ENCODE measurements at regions of chr4 and their contacts with region 1.

Region 1: GRCh38 chr4:52983563-52984303 is 121.6 kb downstream of the RASL11B start:
- DNase-seq: peak; percentile 18
- ATAC-seq: no peak
- H3K4me3 ChIP-seq: no peak overlapping the region
- H3K27ac ChIP-seq: no peak overlapping the region
- H3K4me1 ChIP-seq: no peaks in the 10 kb centered on the region
- H3K27me3 ChIP-seq: no peaks in the 10 kb centered on the region
- CTCF ChIP-seq: peak; percentile 54; the same call in 1 of the 2 replicates

Region 2: DNA sequence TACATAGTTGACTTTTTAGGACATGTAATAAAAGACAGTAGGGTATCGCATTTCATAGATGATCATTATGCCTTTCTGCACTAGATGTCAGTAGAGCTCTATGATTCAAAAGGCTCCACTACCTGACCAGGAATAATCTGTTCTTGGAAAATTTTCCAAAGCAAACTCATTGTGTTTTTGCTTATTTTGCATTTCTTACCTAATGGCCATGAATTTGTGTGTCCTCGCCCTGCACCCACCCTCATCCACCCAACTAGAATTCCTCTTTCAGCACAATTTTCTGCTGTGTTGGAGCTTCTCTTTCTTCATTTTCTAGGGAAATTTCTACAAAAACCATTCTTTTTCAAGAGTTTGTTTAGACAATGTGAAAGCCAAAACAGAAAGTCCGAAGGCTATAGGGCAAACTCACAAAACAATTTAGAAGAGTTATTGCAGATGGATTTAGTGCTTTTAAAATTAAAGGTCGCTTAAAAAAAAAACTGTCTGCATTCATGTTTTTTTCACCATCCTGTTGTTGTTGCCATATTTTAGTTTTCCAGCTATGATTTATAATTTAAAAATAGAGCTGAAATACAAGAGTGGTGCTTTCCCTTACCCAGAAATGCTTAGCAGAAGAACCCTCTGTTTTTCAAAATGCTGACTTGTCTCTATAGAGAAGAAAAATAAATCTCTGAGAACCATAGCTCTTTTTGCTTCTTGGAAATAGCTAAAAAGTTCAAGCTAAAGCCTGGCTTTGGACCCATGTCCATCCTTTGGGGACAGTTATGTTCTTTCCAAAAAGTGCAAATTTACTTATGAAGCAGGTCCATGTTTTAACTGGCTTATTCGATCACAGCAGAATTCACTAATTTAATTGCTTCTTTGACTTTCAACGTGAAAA is 748.9 kb before region 1 on chr4:
- CTCF ChIA-PET with region 1: no interaction called
- POLR2A ChIA-PET with region 1: no interaction called
- in situ Hi-C with region 1: no loop called
- intact Hi-C with region 1: loop called (anchors 10 kb)
- DNase-seq: peak; percentile 10
- ATAC-seq: no peak; the same call in 1 of the 2 replicates
- H3K4me3 ChIP-seq: no peak overlapping the region
- H3K27ac ChIP-seq: no peak overlapping the region
- H3K4me1 ChIP-seq: no peaks in the 10 kb centered on the region
- H3K27me3 ChIP-seq: no peaks in the 10 kb centered on the region
- CTCF ChIP-seq: peak; percentile 37; the same call in 1 of the 2 replicates

Region 3: GRCh38 chr4:52376132-52376704 is 607.5 kb before region 1 on chr4:
- CTCF ChIA-PET with region 1: no interaction called
- POLR2A ChIA-PET with region 1: no interaction called
- in situ Hi-C with region 1: no loop called
- intact Hi-C with region 1: loop called (anchors 2 kb)
- DNase-seq: peak; percentile 12
- ATAC-seq: no peak
- H3K4me3 ChIP-seq: no peak overlapping the region
- H3K27ac ChIP-seq: no peak overlapping the region
- H3K4me1 ChIP-seq: no peaks in the 10 kb centered on the region
- H3K27me3 ChIP-seq: no peaks in the 10 kb centered on the region
- CTCF ChIP-seq: peak; percentile 63; the same call in 1 of the 2 replicates

Region 4: DNA sequence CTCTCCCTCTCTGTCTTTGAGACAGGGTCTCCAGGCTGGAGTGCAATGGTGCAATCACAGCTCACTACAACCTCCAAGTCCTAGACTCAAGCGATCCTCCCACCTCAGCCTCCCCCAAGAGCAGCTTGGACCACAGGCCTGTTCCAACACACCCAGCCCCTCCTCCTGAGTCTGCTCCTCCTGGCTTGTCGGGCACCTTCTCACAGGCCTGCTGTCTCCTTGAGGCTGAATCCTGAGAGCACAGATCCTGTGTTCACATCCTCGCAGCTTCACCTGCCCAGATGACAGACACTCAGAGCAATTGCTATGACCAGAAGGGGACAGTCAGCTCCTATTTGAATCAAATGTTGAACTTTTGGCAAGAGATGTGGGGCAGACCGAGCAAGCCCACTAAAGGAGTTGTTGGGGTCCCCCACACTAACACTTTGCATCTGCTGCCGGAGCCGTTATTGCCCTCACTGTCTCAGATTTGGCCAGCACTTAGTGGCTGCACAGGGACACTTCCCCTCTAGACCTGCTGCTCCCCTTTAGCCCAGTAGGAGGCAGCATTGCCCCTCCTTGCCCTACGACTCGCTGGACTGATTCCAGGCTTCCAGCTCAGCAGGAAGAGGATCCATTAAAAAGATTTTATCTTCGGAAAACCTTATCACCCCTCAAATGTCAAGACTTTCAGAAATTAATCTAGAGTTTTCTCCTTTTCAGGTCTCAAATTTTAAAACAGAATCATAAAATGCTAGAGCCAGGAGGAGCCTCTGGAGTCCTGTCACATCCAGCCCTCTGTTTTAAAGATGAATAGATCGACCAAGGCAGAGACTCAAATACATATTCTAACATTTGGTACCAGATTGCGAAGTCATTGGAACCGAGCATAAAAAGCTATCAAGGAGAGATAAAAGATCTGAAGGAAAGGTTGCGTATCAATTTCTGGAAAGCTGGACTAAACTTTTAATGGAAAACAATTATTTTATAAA is 438.3 kb before region 1 on chr4:
- CTCF ChIA-PET with region 1: interaction called, 5 read pairs
- POLR2A ChIA-PET with region 1: no interaction called
- in situ Hi-C with region 1: no loop called
- intact Hi-C with region 1: loop called (anchors 5 kb)
- DNase-seq: peak; percentile 61
- ATAC-seq: peak; percentile 84
- H3K4me3 ChIP-seq: no peak overlapping the region
- H3K27ac ChIP-seq: no peak overlapping the region
- H3K4me1 ChIP-seq: no peaks in the 10 kb centered on the region
- H3K27me3 ChIP-seq: peaks cover 5% of the 10 kb centered on the region; the same call in 1 of the 2 replicates
- CTCF ChIP-seq: peak; percentile 87

Region 5: DNA sequence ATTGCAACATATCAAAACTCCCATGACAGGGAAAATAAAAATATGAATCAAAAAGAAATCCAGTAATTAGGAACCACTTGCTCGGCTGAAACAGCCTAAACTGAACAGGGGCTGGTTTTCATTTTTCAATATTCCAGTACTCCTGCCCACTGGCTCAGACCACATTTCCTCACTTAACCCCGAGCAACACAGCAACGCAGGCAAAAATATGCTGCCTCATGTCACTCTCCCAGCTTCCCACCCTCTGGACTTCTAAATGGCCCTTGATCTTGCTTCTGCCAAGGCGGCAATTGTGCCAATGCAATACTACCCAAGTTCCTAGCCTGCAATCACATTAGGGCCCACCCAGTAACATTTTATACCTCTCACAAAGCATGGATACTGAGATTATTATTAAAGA is 355.2 kb before region 1 on chr4:
- CTCF ChIA-PET with region 1: no interaction called
- POLR2A ChIA-PET with region 1: no interaction called
- in situ Hi-C with region 1: no loop called
- intact Hi-C with region 1: no loop called
- DNase-seq: no peak
- ATAC-seq: no peak
- H3K4me3 ChIP-seq: no peak overlapping the region
- H3K27ac ChIP-seq: no peak overlapping the region
- H3K4me1 ChIP-seq: no peaks in the 10 kb centered on the region
- H3K27me3 ChIP-seq: no peaks in the 10 kb centered on the region
- CTCF ChIP-seq: no peak

Region 6: GRCh38 chr4:52911684-52912294 is 71.9 kb before region 1 on chr4:
- CTCF ChIA-PET with region 1: no interaction called
- POLR2A ChIA-PET with region 1: no interaction called
- in situ Hi-C with region 1: no loop called
- intact Hi-C with region 1: loop called (anchors 2 kb)
- DNase-seq: peak; percentile 46
- ATAC-seq: peak; percentile 69
- H3K4me3 ChIP-seq: no peak overlapping the region
- H3K27ac ChIP-seq: no peak overlapping the region
- H3K4me1 ChIP-seq: no peaks in the 10 kb centered on the region
- H3K27me3 ChIP-seq: no peaks in the 10 kb centered on the region
- CTCF ChIP-seq: peak; percentile 87

Measured in Panc1 (cell line).